Naive thymus-derived CD4-positive, alpha-beta T cell (primary cell): ENCODE measurements at regions of chr3 and their contacts with region 1.

Region 1: GRCh38 chr3:38521391-38521987 is 25.3 kb downstream of the EXOG start:
- DNase-seq: peak in 8 of 9 donors; percentile 34 to 66 (median 58)
- ATAC-seq: peak; percentile 83
- H3K4me3 ChIP-seq: no peak overlapping the region
- H3K4me3 Mint-ChIP-seq: peak overlapping the region in 1 of 10 donors; percentile 12
- H3K27ac ChIP-seq: no peak overlapping the region
- H3K27ac Mint-ChIP-seq: peak overlapping the region in 4 of 9 donors; percentile 2 to 92 (median 35)
- H3K4me1 ChIP-seq: peaks cover 21 to 30% of the 10 kb centered on the region in 2 donors
- H3K4me1 Mint-ChIP-seq: peaks cover 12 to 45% (median 35%) of the 10 kb centered on the region in 7 donors
- H3K27me3 ChIP-seq: no peaks in the 10 kb centered on the region
- H3K27me3 Mint-ChIP-seq: no peaks in the 10 kb centered on the region

Region 2: DNA sequence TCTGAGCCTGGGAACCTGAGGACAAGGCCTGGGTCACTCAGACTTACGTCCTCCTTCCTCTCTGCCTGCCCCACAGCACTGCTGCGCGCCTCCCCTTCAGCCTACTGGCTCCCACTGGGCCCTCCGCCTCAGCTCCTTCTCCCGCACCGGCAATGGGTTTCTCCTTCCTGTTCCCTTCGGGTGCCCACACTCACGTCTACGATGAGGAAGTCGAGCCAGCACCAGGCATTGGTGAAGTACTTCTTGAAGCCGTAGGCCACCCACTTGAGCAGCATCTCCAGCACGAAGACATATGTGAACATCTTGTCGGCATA is 44.7 kb after region 1 on chr3:
- CTCF ChIA-PET with region 1: no interaction called
- POLR2A ChIA-PET with region 1: no interaction called
- intact Hi-C with region 1: no loop called
- DNase-seq: no peak
- ATAC-seq: no peak
- H3K4me3 ChIP-seq: no peak overlapping the region
- H3K4me3 Mint-ChIP-seq: no peak overlapping the region
- H3K27ac ChIP-seq: no peak overlapping the region
- H3K27ac Mint-ChIP-seq: no peak overlapping the region
- H3K4me1 ChIP-seq: no peaks in the 10 kb centered on the region
- H3K4me1 Mint-ChIP-seq: peaks cover 0 to 2% (median 0%) of the 10 kb centered on the region in 7 donors
- H3K27me3 ChIP-seq: no peaks in the 10 kb centered on the region
- H3K27me3 Mint-ChIP-seq: peaks cover 0 to 6% (median 0%) of the 10 kb centered on the region in 5 donors

Region 3: DNA sequence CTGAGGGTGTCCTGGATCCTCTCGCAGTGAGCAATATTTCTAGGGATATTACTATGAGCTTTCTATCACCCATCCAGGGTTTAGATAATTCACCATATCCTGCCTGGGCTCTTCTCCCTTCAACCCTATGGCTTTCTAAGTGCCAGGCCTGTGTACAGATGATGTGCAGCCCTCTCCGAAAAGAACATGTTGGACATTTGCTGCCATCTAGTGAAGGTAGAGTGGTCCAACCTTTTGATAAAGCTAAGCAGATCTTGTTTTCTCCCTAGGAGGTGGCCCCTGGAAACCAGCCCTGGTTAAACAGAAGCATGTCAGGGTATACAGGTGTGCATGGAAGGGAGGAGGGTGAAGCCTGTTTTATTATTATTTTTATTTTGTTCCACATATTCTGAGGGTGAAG is 322.4 kb after region 1 on chr3:
- CTCF ChIA-PET with region 1: no interaction called
- POLR2A ChIA-PET with region 1: no interaction called
- intact Hi-C with region 1: loop called in 1 of 2 experiments (anchors 10 kb)
- DNase-seq: no peak
- ATAC-seq: no peak
- H3K4me3 ChIP-seq: no peak overlapping the region
- H3K4me3 Mint-ChIP-seq: no peak overlapping the region
- H3K27ac ChIP-seq: no peak overlapping the region
- H3K27ac Mint-ChIP-seq: no peak overlapping the region
- H3K4me1 ChIP-seq: no peaks in the 10 kb centered on the region
- H3K4me1 Mint-ChIP-seq: peaks cover 0 to 2% (median 0%) of the 10 kb centered on the region in 7 donors
- H3K27me3 ChIP-seq: no peaks in the 10 kb centered on the region
- H3K27me3 Mint-ChIP-seq: peaks cover 29 to 36% (median 31%) of the 10 kb centered on the region in 5 donors

Region 4: DNA sequence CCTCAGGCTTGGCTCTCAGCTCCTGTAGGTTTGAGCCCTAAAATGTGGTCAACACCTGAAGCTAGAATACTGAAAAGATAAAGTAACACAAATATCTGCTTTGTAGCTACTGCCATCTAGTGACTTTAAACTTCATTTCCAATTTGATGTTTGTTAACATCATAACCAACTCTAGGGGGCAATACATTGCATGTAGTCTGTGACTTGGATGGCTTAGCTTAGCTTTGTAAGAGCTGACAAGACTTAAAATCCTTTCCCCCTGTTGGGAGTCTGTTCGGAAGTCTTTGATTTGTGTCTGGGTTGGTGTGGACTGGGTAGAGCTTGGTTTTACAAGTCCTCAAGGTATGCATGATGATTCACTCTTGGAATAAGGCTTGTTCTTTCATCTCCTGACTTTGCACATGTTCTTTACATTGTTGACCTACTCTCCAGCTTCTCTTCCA is 478.5 kb after region 1 on chr3:
- CTCF ChIA-PET with region 1: interaction called, 7 read pairs
- POLR2A ChIA-PET with region 1: no interaction called
- intact Hi-C with region 1: loop called (anchors 1 to 2 kb)
- DNase-seq: peak in 6 of 9 donors; percentile 14 to 39 (median 32)
- ATAC-seq: peak; percentile 50
- H3K4me3 ChIP-seq: no peak overlapping the region
- H3K4me3 Mint-ChIP-seq: no peak overlapping the region
- H3K27ac ChIP-seq: no peak overlapping the region
- H3K27ac Mint-ChIP-seq: no peak overlapping the region
- H3K4me1 ChIP-seq: no peaks in the 10 kb centered on the region
- H3K4me1 Mint-ChIP-seq: peaks cover 0 to 2% (median 0%) of the 10 kb centered on the region in 7 donors
- H3K27me3 ChIP-seq: no peaks in the 10 kb centered on the region
- H3K27me3 Mint-ChIP-seq: peaks cover 5 to 16% (median 13%) of the 10 kb centered on the region in 5 donors

Region 5: GRCh38 chr3:39548282-39548681 is 1026.8 kb after region 1 on chr3:
- CTCF ChIA-PET with region 1: no interaction called
- POLR2A ChIA-PET with region 1: no interaction called
- intact Hi-C with region 1: no loop called
- DNase-seq: no peak
- ATAC-seq: no peak
- H3K4me3 ChIP-seq: no peak overlapping the region
- H3K4me3 Mint-ChIP-seq: no peak overlapping the region
- H3K27ac ChIP-seq: no peak overlapping the region
- H3K27ac Mint-ChIP-seq: no peak overlapping the region
- H3K4me1 ChIP-seq: no peaks in the 10 kb centered on the region
- H3K4me1 Mint-ChIP-seq: no peaks in the 10 kb centered on the region
- H3K27me3 ChIP-seq: no peaks in the 10 kb centered on the region
- H3K27me3 Mint-ChIP-seq: peaks cover 13 to 41% (median 34%) of the 10 kb centered on the region in 5 donors